Activated B cell treated with CpG ODN at 0.5 μM for 24 hours (primary cell): ENCODE measurements at regions of chr5 and their contacts with region 1.

Region 1: GRCh38 chr5:59799668-59800346 is 93.7 kb downstream of the PDE4D start:
- DNase-seq: no peak
- ATAC-seq: peak; percentile 60
- H3K4me3 Mint-ChIP-seq: no peak overlapping the region
- H3K27ac Mint-ChIP-seq: no peak overlapping the region
- H3K4me1 Mint-ChIP-seq: peaks cover 10% of the 10 kb centered on the region
- H3K27me3 Mint-ChIP-seq: no peaks in the 10 kb centered on the region
- CTCF ChIP-seq: peak; percentile 91

Region 2: GRCh38 chr5:58491216-58491892 is 1308.5 kb before region 1 on chr5 and contains the start of gene GAPT:
- CTCF ChIA-PET with region 1: no interaction called
- POLR2A ChIA-PET with region 1: no interaction called
- intact Hi-C with region 1: loop called (anchors 1 kb)
- DNase-seq: no peak
- ATAC-seq: peak; percentile 87
- H3K4me3 Mint-ChIP-seq: peak within 1 kb of the TSS; percentile 82
- H3K27ac Mint-ChIP-seq: peak within 1 kb of the TSS; percentile 95
- H3K4me1 Mint-ChIP-seq: peaks cover 66% of the 10 kb centered on the region
- H3K27me3 Mint-ChIP-seq: no peaks in the 10 kb centered on the region
- CTCF ChIP-seq: no peak
- total RNA-seq, gene GAPT: 39.8 and 40.3 TPM in 2 replicates

Region 3: DNA sequence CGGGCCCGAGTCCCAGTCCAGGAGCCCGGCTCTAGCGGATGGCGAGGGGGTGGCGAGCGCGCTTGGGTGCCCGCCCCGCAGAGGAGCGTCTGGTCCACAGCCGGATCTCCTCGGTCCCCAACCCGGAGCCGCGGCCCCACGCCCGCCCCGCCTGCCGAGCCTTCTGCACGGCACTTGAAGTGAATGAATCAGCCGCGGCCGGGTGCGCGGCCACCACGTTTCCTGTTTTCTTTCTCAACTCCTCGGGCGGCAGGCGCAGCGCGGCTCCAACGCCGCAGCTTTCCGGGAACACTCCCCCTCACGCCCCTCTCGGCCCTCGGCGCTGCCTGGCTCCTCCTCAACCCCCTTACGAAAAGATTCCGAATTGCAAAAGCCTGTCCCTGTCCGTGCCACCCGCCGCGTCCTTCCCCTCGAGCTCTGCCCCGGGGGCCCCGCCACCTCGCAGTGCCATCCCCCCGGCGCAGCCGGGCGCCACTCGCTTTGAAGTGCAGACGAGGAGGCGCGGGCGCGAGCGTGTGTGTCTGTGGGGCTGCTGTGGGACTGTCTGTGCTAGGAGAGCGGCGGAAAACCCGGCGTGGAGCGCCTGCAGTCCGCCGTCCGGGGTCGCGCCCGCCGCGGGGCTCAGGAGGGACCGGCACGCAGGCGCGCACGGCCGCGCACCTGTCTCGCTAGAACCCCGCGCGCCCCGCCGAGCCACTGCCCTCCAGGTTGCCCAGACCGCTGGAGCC is 760.3 kb before region 1 on chr5:
- CTCF ChIA-PET with region 1: interaction called, 3 read pairs
- POLR2A ChIA-PET with region 1: no interaction called
- intact Hi-C with region 1: loop called (anchors 5 kb)
- DNase-seq: peak; percentile 61
- ATAC-seq: peak; percentile 75
- H3K4me3 Mint-ChIP-seq: peak overlapping the region; percentile 94
- H3K27ac Mint-ChIP-seq: peak overlapping the region; percentile 85
- H3K4me1 Mint-ChIP-seq: peaks cover 30% of the 10 kb centered on the region
- H3K27me3 Mint-ChIP-seq: peaks cover 14% of the 10 kb centered on the region
- CTCF ChIP-seq: no peak

Region 4: DNA sequence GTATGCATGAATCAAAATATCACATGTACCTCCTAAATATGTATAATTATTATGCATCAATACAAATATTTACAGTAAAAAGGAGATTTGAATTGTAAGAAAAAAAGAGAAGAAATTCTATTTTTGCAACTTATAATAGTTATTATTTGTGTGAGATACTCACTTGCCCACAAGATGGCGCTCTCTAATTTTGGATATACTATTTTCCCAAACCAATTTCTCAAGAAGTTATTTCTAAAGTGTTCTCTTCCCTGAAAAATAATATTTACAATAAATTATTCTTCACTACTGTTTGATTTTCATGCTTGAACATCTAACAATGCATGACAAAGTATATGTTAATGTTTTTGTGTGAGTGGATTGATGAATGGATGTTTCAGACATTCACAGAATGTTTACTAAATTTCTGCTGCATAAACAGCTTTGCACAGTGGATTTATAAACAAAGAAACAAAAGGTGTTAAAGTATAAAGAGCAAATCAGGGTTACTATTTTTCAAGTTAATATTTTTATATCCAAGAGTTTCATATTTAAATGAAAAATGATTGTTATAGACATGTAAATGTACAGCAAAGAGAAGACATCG is 409.6 kb before region 1 on chr5:
- CTCF ChIA-PET with region 1: interaction called, 66 read pairs
- POLR2A ChIA-PET with region 1: no interaction called
- intact Hi-C with region 1: loop called (anchors 1 kb)
- DNase-seq: no peak
- ATAC-seq: no peak
- H3K4me3 Mint-ChIP-seq: no peak overlapping the region
- H3K27ac Mint-ChIP-seq: no peak overlapping the region
- H3K4me1 Mint-ChIP-seq: peaks cover 14% of the 10 kb centered on the region
- H3K27me3 Mint-ChIP-seq: no peaks in the 10 kb centered on the region
- CTCF ChIP-seq: peak; percentile 75

Region 5: DNA sequence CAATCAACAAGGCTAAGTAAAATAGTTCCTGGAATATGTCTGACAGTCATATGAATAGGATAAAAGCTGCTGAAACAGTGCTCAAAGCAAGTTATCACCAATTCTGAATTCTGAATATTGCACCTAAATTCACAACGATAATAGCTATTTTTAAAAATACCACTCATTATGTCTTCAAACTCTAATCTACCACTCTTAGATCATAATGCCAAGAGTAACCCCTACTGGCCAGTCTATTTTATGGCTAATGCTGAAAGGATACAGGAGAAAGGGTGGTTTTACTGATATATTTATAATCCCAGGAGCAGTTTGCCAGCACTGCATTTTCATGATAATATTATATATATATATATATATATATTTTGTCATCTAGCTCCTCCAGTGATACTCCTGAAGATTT is 139.1 kb before region 1 on chr5:
- CTCF ChIA-PET with region 1: interaction called, 10 read pairs
- POLR2A ChIA-PET with region 1: no interaction called
- intact Hi-C with region 1: no loop called
- DNase-seq: no peak
- ATAC-seq: peak; percentile 40
- H3K4me3 Mint-ChIP-seq: no peak overlapping the region
- H3K27ac Mint-ChIP-seq: no peak overlapping the region
- H3K4me1 Mint-ChIP-seq: peaks cover 47% of the 10 kb centered on the region
- H3K27me3 Mint-ChIP-seq: no peaks in the 10 kb centered on the region
- CTCF ChIP-seq: no peak

Region 6: DNA sequence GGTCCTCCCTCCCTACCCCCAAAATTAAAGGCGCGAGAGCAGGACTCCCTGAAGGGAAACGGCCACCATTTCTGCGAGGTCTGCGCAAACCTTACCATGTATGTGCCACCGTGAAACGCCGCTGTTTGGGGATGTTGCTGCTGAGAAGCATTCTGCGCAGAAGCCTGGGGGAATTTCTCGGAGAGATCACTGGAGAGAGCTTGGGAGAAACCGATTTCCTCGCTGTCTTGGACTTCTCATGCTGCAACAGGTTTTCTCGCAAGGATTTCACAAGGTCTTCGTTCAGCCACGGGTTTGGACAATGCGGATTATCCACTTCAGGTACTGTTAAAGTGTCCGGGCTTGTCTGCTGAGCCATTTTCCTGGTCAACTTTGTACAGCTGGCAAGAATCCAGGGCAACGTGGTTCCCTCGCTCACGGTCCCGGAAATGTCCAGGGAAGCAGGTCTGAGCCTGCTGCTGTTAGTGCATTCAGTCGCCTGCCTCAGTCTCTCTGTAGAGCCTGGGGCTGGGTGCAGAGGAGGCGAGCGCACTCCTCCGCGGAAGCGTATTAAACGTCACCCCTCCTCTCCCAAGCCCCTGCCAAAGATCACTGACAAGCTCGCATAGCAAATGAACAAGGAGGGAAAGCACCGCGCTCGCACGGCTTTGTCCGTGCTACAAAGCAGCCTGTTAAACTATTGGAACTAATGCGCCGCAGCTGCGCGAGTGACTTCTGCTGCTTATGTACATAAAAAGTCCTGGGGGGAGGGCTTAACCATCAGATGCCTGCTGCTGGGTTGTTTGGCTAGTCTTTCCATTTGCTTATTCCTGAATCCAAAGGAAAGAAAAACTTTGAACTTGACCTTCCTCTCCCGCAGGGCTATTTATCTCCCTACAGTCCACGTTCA is 31.4 kb before region 1 on chr5:
- CTCF ChIA-PET with region 1: interaction called, 4 read pairs
- POLR2A ChIA-PET with region 1: interaction called, 9 read pairs
- intact Hi-C with region 1: loop called (anchors 2 kb)
- DNase-seq: peak; percentile 31
- ATAC-seq: peak; percentile 88
- H3K4me3 Mint-ChIP-seq: peak overlapping the region; percentile 91
- H3K27ac Mint-ChIP-seq: peak overlapping the region; percentile 79
- H3K4me1 Mint-ChIP-seq: peaks cover 55% of the 10 kb centered on the region
- H3K27me3 Mint-ChIP-seq: peaks cover 7% of the 10 kb centered on the region
- CTCF ChIP-seq: no peak

Region 7: GRCh38 chr5:60362158-60362557 is 562.4 kb after region 1 on chr5:
- CTCF ChIA-PET with region 1: no interaction called
- POLR2A ChIA-PET with region 1: no interaction called
- intact Hi-C with region 1: no loop called
- DNase-seq: no peak
- ATAC-seq: no peak
- H3K4me3 Mint-ChIP-seq: no peak overlapping the region
- H3K27ac Mint-ChIP-seq: no peak overlapping the region
- H3K4me1 Mint-ChIP-seq: no peaks in the 10 kb centered on the region
- H3K27me3 Mint-ChIP-seq: no peaks in the 10 kb centered on the region
- CTCF ChIP-seq: no peak

Region 8: GRCh38 chr5:60522292-60522905 is 722.6 kb after region 1 on chr5:
- CTCF ChIA-PET with region 1: no interaction called
- POLR2A ChIA-PET with region 1: no interaction called
- intact Hi-C with region 1: no loop called
- DNase-seq: no peak
- ATAC-seq: peak; percentile 78
- H3K4me3 Mint-ChIP-seq: no peak overlapping the region
- H3K27ac Mint-ChIP-seq: no peak overlapping the region
- H3K4me1 Mint-ChIP-seq: peaks cover 38% of the 10 kb centered on the region
- H3K27me3 Mint-ChIP-seq: no peaks in the 10 kb centered on the region
- CTCF ChIP-seq: no peak